Left ventricle myocardium inferior (tissue), 1 donor: ENCODE measurements at regions of chr2 and their contacts with region 1.

Region 1: GRCh38 chr2:203683932-203684556 is 22.4 kb upstream of the CD28 start:
- DNase-seq: no peak
- H3K4me3 ChIP-seq: no peak overlapping the region
- H3K27ac ChIP-seq: peak overlapping the region; percentile 90
- H3K4me1 ChIP-seq: peaks cover 86% of the 10 kb centered on the region
- H3K27me3 ChIP-seq: no peaks in the 10 kb centered on the region
- CTCF ChIP-seq: no peak

Region 2: GRCh38 chr2:202038471-202039277 is 1645.4 kb before region 1 on chr2:
- intact Hi-C with region 1: no loop called
- DNase-seq: peak; percentile 25
- H3K4me3 ChIP-seq: peak overlapping the region; percentile 87
- H3K27ac ChIP-seq: peak overlapping the region; percentile 75
- H3K4me1 ChIP-seq: peaks cover 58% of the 10 kb centered on the region
- H3K27me3 ChIP-seq: peaks cover 65% of the 10 kb centered on the region
- CTCF ChIP-seq: no peak

Region 3: GRCh38 chr2:203782262-203782976 is 98.4 kb after region 1 on chr2:
- intact Hi-C with region 1: loop called (anchors 10 kb)
- DNase-seq: no peak
- H3K4me3 ChIP-seq: no peak overlapping the region
- H3K27ac ChIP-seq: peak overlapping the region; percentile 2
- H3K4me1 ChIP-seq: peaks cover 38% of the 10 kb centered on the region
- H3K27me3 ChIP-seq: no peaks in the 10 kb centered on the region
- CTCF ChIP-seq: peak; percentile 76